Activated CD4-positive, alpha-beta T cell treated with anti-CD3 and anti-CD28 coated beads for 36 hours (primary cell): ENCODE measurements at regions of chr12 and their contacts with region 1.

Region 1: DNA sequence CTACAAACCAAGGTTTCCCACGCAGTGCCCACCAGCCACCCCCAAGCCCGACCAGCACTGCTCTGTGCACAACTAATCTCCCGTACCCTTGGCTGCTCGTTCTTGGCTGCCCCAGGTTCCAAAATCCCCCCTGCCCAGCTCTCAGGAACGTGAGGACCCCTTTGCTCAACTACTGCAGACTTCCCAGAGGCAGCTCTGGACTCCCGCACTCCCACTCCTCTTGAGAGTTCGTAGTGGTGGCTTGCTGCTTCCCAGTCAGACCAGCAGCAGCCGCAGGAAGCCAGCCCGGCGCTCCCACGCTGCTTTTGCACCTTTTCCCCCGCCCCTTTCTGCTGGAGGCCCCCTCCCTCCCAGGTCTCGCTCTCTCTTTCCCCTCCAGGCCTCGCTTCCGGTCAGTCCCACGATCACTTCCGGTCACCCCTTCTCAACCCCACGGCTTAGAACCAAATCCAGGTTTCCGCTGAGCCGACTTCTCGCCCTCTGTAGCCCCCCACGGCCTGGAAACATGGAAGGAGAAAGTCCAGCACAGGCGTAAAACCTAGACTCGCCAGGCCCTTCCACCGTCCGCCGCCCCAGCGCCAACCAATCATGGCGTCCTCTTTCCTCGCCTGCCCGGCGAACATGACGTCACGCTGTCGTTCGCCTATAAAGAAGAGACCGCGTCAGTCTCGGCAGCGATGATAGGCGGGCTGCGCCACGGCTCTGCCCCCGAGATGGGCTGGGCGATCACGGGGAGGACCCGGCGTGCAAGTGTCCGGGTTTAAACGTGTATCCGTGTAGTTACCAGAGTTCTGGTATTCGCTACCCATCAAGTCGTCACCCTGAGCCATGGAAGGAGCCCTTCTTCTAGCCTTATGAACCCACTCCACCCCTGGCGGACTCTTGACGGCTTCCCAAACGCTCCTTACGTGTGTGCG is at the start of gene TFCP2:
- DNase-seq: peak; percentile 97
- ATAC-seq: peak; percentile 99
- H3K4me3 Mint-ChIP-seq: no peak within 1 kb of the TSS
- H3K27ac Mint-ChIP-seq: peak within 1 kb of the TSS; percentile 78
- H3K4me1 Mint-ChIP-seq: peaks cover 10% of the 10 kb centered on the region
- H3K27me3 Mint-ChIP-seq: no peaks in the 10 kb centered on the region
- total RNA-seq, gene TFCP2: 39.5 to 47.3 TPM

Region 2: GRCh38 chr12:51047655-51048540 is 124.9 kb before region 1 on chr12 and contains the start of gene LETMD1:
- CTCF ChIA-PET with region 1: interaction called, 3 read pairs
- POLR2A ChIA-PET with region 1: no interaction called
- intact Hi-C with region 1: loop called in 1 of 2 experiments (anchors 1 kb)
- DNase-seq: peak; percentile 94
- ATAC-seq: peak; percentile 98
- H3K4me3 Mint-ChIP-seq: peak within 1 kb of the TSS; percentile 92
- H3K27ac Mint-ChIP-seq: peak within 1 kb of the TSS; percentile 92
- H3K4me1 Mint-ChIP-seq: peaks cover 23% of the 10 kb centered on the region
- H3K27me3 Mint-ChIP-seq: no peaks in the 10 kb centered on the region
- total RNA-seq, gene LETMD1: 69.6 to 79.6 TPM

Region 3: GRCh38 chr12:51217968-51218606 is 45.3 kb after region 1 on chr12 and contains the start of gene POU6F1:
- CTCF ChIA-PET with region 1: interaction called, 3 read pairs
- POLR2A ChIA-PET with region 1: no interaction called
- intact Hi-C with region 1: loop called (anchors 1 to 2 kb)
- DNase-seq: peak; percentile 80
- ATAC-seq: peak; percentile 80
- H3K4me3 Mint-ChIP-seq: peak within 1 kb of the TSS; percentile 91
- H3K27ac Mint-ChIP-seq: peak within 1 kb of the TSS; percentile 95
- H3K4me1 Mint-ChIP-seq: peaks cover 17% of the 10 kb centered on the region
- H3K27me3 Mint-ChIP-seq: no peaks in the 10 kb centered on the region
- total RNA-seq, gene POU6F1: 8.7 to 12.9 TPM

Region 4: DNA sequence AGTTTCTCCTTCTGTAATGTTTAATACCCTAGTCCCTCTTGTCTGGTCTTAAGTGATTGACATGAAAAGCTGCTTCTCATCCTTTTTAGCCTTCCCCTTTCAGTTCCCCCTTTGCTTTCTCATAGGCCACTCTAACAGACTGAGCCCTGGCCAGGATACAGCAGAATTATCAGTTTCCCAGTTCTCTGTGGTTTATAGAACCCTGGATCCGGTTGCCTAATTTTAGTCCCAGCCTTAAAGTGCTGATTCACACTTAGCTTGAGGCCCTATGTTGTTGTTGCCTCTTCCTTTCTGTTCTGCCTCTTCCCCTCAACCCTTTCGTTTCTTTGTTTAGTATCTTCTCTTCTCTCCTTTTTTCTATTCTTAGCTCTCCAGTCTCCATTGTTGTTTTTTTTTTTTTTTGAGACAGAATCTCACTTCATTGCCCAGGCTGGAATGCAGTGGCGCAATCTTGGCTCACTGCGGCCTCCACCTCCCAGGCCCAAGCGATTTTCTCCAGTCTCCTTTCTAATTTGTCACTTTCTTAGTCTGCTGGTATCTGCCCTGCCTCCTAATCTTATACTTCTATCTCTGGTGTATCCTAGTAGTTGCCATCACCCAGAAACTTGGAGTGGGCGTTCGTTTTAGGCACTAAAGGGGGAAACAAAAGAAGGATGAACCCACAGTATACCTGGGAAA is 154.1 kb after region 1 on chr12:
- CTCF ChIA-PET with region 1: no interaction called
- POLR2A ChIA-PET with region 1: no interaction called
- intact Hi-C with region 1: loop called in 1 of 2 experiments (anchors 2 kb)
- DNase-seq: no peak
- ATAC-seq: peak; percentile 18
- H3K4me3 Mint-ChIP-seq: peak overlapping the region; percentile 49
- H3K27ac Mint-ChIP-seq: peak overlapping the region; percentile 88
- H3K4me1 Mint-ChIP-seq: peaks cover 68% of the 10 kb centered on the region
- H3K27me3 Mint-ChIP-seq: no peaks in the 10 kb centered on the region